Gastrocnemius medialis (tissue), 4 donors: ENCODE measurements at regions of chr6 and their contacts with region 1.

Region 1: DNA sequence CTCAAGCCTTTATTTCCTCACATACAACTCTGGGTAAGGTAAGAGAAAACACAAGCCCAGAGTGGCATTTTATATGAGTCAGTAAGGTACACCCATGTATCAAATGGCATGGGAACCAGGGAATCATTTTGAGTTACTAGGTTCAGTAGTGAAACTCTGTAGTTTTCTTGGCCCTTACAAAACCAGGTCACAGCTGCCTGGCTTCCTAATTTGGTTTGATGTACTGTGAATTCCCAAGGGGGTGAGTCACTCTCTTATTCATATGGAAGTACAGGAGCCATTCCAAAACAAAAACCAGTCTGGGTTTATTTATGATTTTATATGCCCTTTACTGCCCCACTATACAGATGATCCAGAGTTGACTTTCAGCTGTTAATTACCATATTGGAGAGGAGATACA is 70.7 kb downstream of the PDE7B start:
- DNase-seq: peak; percentile 72 to 76
- ATAC-seq: peak; percentile 97 to 99
- H3K4me3 ChIP-seq: peak overlapping the region in 1 of 4 donors; percentile 7
- H3K27ac ChIP-seq: peak overlapping the region; percentile 68 to 78 (median 69)
- H3K4me1 ChIP-seq: peaks cover 38 to 39% of the 10 kb centered on the region in 2 donors
- H3K27me3 ChIP-seq: no peaks in the 10 kb centered on the region
- CTCF ChIP-seq: no peak
- POLR2A ChIP-seq: no peak

Region 2: DNA sequence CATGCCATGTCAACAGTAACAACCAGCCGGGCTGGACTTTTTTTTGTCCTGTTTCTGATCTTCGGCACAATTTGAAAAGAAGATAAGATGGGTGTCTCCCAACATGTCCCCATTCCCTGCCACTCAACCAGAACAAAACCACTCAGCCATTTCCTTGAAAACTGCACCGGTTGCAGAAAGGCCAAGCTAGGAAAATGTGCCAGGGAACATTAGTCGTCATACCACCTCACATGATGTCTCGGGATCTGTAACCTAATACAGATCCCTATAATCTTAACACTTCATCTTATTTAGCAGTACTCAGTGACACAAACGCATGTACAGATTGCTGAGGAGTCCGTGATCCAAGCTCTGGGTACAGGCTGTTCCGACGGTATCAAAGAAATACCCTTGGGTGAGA is 1018.7 kb before region 1 on chr6:
- in situ Hi-C with region 1: no loop called
- intact Hi-C with region 1: loop called (anchors 5 kb)
- DNase-seq: peak; percentile 58 to 67
- ATAC-seq: peak; percentile 93 to 96
- H3K4me3 ChIP-seq: no peak overlapping the region
- H3K27ac ChIP-seq: peak overlapping the region; percentile 70 to 90 (median 78)
- H3K4me1 ChIP-seq: peaks cover 13 to 23% of the 10 kb centered on the region in 2 donors
- H3K27me3 ChIP-seq: no peaks in the 10 kb centered on the region
- CTCF ChIP-seq: no peak
- POLR2A ChIP-seq: no peak

Region 3: DNA sequence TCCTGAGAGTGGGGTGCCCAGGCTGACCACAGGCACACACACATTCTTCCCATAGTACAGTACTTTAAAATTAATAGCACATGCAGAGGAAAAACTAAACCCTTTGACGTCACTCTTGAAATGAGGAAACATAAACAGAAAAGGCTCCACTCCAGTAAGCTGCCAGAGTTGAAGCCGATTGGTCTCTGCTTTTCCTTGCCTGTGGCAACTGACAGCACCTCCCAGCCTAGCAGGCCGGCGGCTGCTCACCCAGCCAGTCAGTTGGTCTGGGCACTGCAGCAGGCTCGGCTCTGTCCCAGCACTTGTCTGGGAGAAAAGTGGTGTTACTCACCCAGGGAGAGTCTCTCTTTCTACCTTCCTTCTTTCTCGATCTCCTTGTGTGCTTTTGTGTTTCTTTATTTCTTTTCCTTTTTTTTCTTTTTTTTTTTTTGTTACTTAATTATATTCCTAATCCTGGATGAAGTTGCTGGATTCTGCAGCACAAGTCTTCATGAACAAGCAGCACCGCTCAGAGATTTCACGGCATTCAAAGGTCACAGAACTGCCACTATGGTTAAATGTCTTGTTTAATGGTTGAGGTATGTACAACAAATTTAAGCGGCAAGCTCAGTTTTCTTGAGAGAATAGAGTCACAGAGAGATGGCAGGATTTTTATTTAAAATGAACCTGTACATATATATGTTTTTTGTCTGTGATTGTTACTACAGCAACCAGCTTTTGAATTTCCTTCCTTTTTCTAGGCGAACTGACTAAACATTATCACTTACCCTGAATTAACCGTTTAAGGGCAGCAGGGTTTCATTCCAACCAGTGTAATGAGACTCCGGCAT is 70.5 kb before region 1 on chr6 and contains the start of gene PDE7B:
- in situ Hi-C with region 1: no loop called
- intact Hi-C with region 1: loop called (anchors 2 kb)
- DNase-seq: peak; percentile 78 to 85
- ATAC-seq: peak; percentile 91 to 92
- H3K4me3 ChIP-seq: peak within 1 kb of the TSS; percentile 45 to 59 (median 53)
- H3K27ac ChIP-seq: peak within 1 kb of the TSS; percentile 65 to 87 (median 74)
- H3K4me1 ChIP-seq: peaks cover 14 to 28% of the 10 kb centered on the region in 2 donors
- H3K27me3 ChIP-seq: no peaks in the 10 kb centered on the region
- CTCF ChIP-seq: no peak
- POLR2A ChIP-seq: peak; percentile 73 to 87
- total RNA-seq, gene PDE7B: 2.2 to 3.6 (median 2.7) TPM

Region 4: DNA sequence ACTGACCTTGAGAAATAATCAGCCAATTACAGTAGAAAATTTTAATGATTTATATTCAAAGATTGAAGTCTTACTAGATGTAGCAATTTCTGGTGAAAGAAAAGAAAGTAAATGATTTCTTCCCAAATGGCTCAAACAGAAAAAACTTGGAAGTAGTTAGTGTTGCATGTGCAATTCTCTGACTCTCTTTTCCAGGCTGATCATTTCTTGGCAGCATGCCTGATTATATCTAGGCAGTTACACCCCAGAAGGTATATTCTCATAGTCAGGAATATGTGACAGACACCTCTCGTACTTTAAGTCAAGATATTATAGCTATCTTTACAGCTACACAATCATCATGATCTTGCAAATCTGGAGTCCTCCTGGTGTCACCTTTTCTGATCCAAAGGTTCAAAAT is 52.3 kb after region 1 on chr6:
- in situ Hi-C with region 1: no loop called
- intact Hi-C with region 1: no loop called
- DNase-seq: no peak
- ATAC-seq: no peak
- H3K4me3 ChIP-seq: no peak overlapping the region
- H3K27ac ChIP-seq: no peak overlapping the region
- H3K4me1 ChIP-seq: peaks cover 0 to 5% of the 10 kb centered on the region in 2 donors
- H3K27me3 ChIP-seq: no peaks in the 10 kb centered on the region
- CTCF ChIP-seq: no peak
- POLR2A ChIP-seq: no peak

Region 5: GRCh38 chr6:136014454-136015421 is 92.6 kb after region 1 on chr6:
- in situ Hi-C with region 1: no loop called
- intact Hi-C with region 1: no loop called
- DNase-seq: no peak
- ATAC-seq: no peak
- H3K4me3 ChIP-seq: no peak overlapping the region
- H3K27ac ChIP-seq: no peak overlapping the region
- H3K4me1 ChIP-seq: peaks cover 0 to 6% of the 10 kb centered on the region in 2 donors
- H3K27me3 ChIP-seq: no peaks in the 10 kb centered on the region
- CTCF ChIP-seq: no peak
- POLR2A ChIP-seq: no peak